ENCODE measurements at regions of chr11 and their contacts with region 1.

Region 1: GRCh38 chr11:126989942-126990715 is 10.4 kb downstream of the KIRREL3 start:
- DNase-seq: no peak
- H3K4me3 ChIP-seq: peak overlapping the region; percentile 44
- CTCF ChIP-seq: peak; percentile 95

Region 2: DNA sequence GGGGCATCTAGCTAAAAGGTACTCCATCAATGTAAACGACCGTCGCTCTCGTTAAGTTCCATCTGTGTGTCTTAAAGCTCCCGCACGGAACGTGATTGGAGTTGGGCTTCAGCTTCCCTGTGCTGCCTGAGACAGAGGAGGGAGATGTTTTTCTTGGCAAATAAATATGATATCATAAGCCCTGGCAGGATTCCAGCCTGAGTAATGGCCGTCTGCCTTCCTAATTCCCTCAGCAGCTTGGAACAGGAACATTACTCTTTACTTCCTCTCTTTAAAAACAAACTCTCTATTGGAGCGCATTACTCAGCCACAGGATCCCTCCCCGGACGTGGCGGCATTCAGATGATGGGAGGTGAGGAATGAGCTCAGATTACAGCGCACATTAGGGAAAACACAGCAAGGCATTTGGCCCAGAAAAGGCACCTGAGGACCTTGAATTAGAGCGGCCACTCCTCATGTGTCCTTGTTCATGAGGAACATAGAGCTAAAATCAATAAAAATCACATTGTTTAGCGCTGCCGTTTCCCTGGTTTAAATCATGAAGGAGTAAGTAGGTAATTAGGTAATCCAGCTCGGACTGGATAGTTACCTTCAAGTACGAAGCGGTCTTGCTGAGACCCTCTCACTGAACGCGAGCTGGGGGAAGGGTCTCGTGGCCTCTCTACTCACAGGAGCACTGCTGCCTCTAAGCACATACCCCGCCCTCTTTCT is 404.2 kb before region 1 on chr11:
- CTCF ChIA-PET with region 1: interaction called, 22 read pairs
- POLR2A ChIA-PET with region 1: interaction called, 3 read pairs
- DNase-seq: peak; percentile 89
- H3K4me3 ChIP-seq: peak overlapping the region; percentile 36
- CTCF ChIP-seq: no peak

Region 3: GRCh38 chr11:126636911-126637794 is 353.0 kb before region 1 on chr11:
- CTCF ChIA-PET with region 1: interaction called, 17 read pairs
- POLR2A ChIA-PET with region 1: interaction called, 7 read pairs
- DNase-seq: peak; percentile 69
- H3K4me3 ChIP-seq: no peak overlapping the region
- CTCF ChIP-seq: no peak

Region 4: DNA sequence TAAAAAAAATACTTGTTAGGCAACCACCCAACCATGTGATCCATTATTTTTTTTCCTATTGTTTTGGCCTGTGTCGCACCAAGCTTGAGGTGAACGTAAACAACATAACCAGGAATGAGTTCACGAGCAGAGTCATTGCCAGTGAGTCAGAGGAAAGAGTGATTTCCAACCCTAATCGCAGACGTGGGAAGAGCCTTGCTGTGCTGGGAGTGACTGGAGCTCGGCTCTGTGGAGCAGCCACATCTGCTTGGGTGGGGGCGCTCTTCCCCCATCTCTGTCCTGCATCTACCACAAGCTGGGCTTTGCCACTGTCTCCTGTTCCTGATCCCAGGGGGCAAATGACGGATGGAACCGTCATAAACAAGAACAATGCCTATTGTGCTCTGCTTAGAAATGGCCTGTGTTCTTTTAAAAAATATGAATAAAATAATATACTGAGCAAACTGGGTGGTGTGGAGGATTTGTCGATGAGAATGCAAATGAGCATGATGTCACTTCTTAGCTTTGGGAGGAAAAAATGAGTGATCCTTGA is 199.5 kb before region 1 on chr11:
- CTCF ChIA-PET with region 1: interaction called, 22 read pairs
- POLR2A ChIA-PET with region 1: no interaction called
- DNase-seq: peak; percentile 77
- H3K4me3 ChIP-seq: no peak overlapping the region
- CTCF ChIP-seq: peak; percentile 55

Region 5: GRCh38 chr11:126834149-126834548 is 156.0 kb before region 1 on chr11:
- CTCF ChIA-PET with region 1: interaction called, 16 read pairs
- POLR2A ChIA-PET with region 1: no interaction called
- DNase-seq: peak; percentile 70
- H3K4me3 ChIP-seq: no peak overlapping the region
- CTCF ChIP-seq: no peak

Region 6: DNA sequence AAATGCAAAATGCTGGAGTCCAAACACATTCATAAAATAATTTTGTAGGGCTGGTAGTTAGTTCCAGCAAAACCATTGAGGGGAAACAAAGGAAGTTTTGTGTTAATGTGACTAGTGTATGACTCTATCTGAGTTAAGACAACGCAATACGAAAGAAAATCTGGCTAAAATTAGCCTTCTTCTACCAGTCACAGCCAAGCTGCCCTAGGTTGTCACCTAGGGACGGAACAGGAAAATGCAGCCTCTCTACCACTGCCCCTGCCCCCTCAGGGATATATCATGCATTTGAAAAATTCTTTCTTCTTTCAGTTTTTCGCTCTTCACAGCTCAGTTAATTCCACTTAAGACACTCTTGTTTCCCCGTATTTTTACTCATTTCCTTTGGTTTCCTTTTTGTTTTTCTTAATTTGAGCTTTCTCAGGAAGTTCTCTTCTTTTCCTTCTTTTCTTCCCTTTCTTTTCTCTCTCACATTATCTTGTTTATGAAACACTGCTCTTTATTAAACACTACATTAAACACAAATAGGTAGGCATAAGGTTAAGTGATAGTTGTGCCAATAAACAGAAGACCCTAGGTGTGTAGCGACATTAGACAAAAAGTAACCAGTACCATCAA is 20.2 kb before region 1 on chr11:
- CTCF ChIA-PET with region 1: interaction called, 36 read pairs
- POLR2A ChIA-PET with region 1: no interaction called
- DNase-seq: no peak
- H3K4me3 ChIP-seq: no peak overlapping the region
- CTCF ChIP-seq: peak; percentile 80

Measured in AG04449 (cell line).